ENCODE measurements at regions of chr5 and their contacts with region 1.

Region 1: GRCh38 chr5:140302786-140303639 is at the start of gene PFDN1:
- DNase-seq: peak; percentile 90 to 93
- ATAC-seq: peak; percentile 98 to 99
- H3K4me3 ChIP-seq: peak within 1 kb of the TSS; percentile 80 to 96 (median 88)
- H3K27ac ChIP-seq: peak within 1 kb of the TSS; percentile 90 to 95 (median 94)
- H3K4me1 ChIP-seq: peaks cover 30 to 34% of the 10 kb centered on the region in 2 donors
- H3K27me3 ChIP-seq: no peaks in the 10 kb centered on the region
- CTCF ChIP-seq: no peak
- POLR2A ChIP-seq: peak; percentile 51 to 62
- total RNA-seq, gene PFDN1: 47.9 to 81.0 (median 77.9) TPM

Region 2: DNA sequence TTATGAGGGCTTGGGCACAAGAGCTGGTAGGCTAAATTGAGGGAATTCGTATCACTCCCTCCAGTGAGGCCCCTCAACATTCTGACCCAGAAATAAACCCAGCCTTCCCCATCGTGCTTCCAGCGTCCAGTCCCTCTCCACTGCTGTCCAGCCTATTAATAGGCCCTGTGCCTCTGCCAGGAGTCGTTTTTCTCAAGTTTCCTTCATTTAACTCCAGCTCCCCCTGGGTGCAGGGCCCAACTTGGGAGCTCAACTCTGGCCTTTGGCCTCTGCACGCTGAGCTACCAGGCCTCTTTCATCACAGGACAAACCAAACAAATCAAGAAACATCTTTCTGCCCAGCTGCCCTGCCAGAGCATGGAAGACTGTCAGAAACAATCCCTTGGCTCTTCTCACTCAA is 33.4 kb after region 1 on chr5:
- in situ Hi-C with region 1: loop called in 1 of 4 experiments (anchors 5 kb)
- intact Hi-C with region 1: no loop called
- DNase-seq: peak; percentile 21 to 62
- ATAC-seq: peak; percentile 41 to 51
- H3K4me3 ChIP-seq: no peak overlapping the region
- H3K27ac ChIP-seq: peak overlapping the region; percentile 91 to 97 (median 94)
- H3K4me1 ChIP-seq: peaks cover 53 to 78% of the 10 kb centered on the region in 2 donors
- H3K27me3 ChIP-seq: no peaks in the 10 kb centered on the region
- CTCF ChIP-seq: no peak
- POLR2A ChIP-seq: no peak